AG04449 (cell line): ENCODE measurements at regions of chr11 and their contacts with region 1.

Region 1: DNA sequence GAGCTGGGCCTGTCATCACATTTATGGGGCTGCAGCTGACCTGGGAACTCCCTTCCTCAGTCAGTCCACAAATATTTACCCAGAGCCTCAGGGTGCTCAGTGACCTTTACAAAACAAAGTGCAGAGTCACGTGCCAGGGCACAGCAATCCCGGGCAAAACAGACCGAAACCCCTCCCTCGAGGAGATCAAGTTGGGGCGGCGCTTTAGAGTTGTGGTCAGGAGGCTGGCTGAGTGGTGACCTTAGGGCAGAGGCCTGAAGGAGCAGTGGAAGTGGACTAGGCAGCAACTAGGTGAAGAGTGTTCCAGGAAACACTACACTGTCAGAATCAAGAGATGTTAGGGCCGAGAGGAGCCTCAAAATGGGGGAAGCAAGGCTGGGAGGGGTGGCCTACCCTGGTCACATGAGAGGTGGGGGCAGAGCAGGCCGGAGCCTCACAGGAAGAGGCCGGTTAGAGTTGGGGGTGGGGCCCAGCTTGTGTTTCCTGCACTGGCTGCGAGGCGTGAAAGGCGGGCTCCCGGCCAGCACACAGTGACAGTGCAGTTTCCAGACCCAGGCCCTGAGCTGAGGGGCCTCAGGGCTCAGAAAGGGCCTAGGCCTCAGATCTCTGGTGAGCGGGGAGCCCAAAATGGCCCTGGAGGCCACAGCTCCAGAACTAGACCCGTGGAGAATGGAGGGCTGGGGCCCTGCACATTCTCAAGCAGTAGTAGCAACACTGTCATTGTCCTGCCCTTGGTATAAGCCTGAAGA is 3.7 kb upstream of the NEAT1 start:
- DNase-seq: no peak
- H3K4me3 ChIP-seq: peak overlapping the region; percentile 46
- CTCF ChIP-seq: no peak

Region 2: DNA sequence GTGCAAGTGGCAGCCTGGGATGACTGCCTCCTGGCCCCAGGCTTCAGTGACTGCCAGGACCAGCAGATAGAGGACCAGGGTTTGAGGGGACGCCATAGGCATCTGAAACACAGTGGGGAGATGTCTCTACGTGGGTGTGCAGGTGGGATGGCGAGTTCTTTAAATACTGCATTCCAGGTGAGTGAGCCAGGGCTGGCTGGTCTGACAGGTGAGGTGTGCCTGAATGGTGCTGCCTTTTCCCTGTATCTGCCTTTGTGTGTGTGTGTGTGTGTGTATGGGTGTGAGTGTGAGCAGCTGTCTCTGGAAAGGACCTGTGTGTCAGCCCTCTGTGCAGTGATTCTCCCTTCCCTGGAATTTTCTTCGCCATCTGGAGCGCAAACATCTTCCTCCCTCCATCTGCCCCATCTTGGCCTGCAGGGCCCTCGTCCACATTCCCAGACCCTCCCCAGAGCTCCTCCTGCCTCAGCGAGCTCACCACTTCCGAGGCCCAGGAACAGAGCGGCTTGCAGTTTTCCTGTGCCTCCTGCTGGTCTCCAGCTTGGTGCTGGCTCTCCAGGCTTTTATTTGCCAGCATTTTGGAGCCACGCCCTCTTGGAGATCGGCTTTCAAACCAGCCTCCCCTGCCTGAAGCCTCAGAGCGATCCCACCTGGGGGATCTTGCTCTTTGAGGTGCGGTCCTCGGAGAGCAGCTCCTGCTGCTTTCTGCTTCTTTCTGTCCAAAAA is 483.4 kb before region 1 on chr11 and contains the start of gene GPHA2:
- CTCF ChIA-PET with region 1: no interaction called
- POLR2A ChIA-PET with region 1: no interaction called
- DNase-seq: no peak
- H3K4me3 ChIP-seq: no peak within 1 kb of the TSS
- CTCF ChIP-seq: peak; percentile 13

Region 3: GRCh38 chr11:65317074-65317786 is 101.7 kb before region 1 on chr11:
- CTCF ChIA-PET with region 1: no interaction called
- POLR2A ChIA-PET with region 1: no interaction called
- DNase-seq: no peak
- H3K4me3 ChIP-seq: peak overlapping the region; percentile 87
- CTCF ChIP-seq: no peak

Region 4: DNA sequence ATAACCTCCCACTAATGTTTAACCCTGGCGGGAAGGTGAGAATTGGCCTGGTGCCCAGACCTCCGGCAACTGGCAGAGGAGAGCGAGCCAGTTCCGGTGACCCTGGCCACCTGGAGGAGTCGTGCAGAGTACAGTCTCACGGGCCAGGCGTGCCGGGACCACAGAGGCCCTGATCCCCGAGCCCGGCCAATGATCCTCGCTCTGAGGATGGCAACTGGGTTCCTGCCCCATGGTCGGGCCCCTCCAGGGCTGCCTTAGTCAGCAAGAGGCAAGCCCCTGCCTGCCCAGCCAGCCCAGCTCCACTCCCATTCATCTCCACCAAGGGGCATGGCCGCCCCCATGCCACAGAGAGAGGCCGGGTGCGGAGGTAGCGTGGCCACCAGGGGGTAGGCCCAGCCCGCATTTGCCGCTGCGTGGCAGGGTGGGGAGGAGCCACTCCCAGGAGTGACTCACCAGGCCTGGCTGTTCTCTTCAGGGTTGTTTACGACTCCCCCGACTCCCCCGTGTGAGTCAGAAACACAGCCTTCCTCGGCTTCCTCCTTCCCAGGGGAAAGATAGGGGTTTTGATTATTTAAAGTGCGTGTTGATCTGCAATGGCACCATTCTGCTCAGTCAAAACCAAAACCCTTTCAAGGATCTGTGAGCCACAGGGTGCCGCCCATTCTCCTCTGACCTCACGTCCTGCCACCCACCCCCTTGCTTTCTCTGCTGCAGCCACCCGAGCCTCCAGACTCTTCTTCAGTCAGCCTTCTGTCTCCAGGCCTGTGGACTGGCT is 36.7 kb before region 1 on chr11 and contains the start of gene SLC25A45:
- CTCF ChIA-PET with region 1: interaction called, 90 read pairs
- POLR2A ChIA-PET with region 1: interaction called, 66 read pairs
- DNase-seq: peak; percentile 95
- H3K4me3 ChIP-seq: peak within 1 kb of the TSS; percentile 53
- CTCF ChIP-seq: peak; percentile 88

Region 5: DNA sequence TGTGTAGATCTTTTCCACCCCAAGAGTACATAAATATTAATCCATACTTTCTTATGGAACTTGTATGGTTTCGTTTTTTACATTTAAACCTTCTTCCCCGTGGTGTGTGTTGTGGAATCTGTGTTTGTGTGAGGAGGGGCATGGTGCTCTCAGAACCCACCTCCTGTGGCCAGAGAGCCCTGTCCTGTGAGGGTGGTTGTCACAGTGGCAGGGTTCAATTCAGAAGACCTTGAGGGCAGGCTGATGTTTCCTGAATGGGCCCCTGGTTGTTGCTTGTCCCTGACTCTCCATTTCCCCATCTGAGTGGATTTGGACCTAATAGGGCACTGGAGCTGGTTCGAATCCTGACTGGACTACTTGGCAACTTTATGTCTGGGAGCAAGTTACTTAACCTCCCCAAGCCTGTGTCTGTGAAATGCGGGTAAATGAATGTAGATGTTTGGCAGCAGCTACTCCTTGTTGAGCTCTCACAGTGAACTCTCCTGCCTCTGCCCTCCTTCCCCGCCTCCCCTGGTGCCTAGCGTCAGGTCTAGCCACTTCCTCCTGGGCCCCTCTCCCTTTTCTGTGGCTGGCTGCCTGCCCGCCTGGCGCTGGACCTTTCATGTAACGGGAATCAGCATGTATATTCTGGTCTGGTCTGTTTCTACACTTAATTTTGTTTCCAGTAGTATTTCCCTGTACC is 11.0 kb after region 1 on chr11:
- CTCF ChIA-PET with region 1: interaction called, 4 read pairs
- POLR2A ChIA-PET with region 1: interaction called, 20 read pairs
- DNase-seq: no peak
- H3K4me3 ChIP-seq: peak overlapping the region; percentile 98
- CTCF ChIP-seq: no peak

Region 6: GRCh38 chr11:65471410-65471762 is 52.5 kb after region 1 on chr11:
- CTCF ChIA-PET with region 1: interaction called, 6 read pairs
- POLR2A ChIA-PET with region 1: interaction called, 70 read pairs
- DNase-seq: no peak
- H3K4me3 ChIP-seq: peak overlapping the region; percentile 42
- CTCF ChIP-seq: peak; percentile 73

Region 7: GRCh38 chr11:65497141-65498041 is 78.5 kb after region 1 on chr11:
- CTCF ChIA-PET with region 1: interaction called, 9 read pairs
- POLR2A ChIA-PET with region 1: interaction called, 664 read pairs
- DNase-seq: no peak
- H3K4me3 ChIP-seq: peak overlapping the region; percentile 68
- CTCF ChIP-seq: no peak